ENCODE measurements at regions of chr17 and their contacts with region 1.

Region 1: DNA sequence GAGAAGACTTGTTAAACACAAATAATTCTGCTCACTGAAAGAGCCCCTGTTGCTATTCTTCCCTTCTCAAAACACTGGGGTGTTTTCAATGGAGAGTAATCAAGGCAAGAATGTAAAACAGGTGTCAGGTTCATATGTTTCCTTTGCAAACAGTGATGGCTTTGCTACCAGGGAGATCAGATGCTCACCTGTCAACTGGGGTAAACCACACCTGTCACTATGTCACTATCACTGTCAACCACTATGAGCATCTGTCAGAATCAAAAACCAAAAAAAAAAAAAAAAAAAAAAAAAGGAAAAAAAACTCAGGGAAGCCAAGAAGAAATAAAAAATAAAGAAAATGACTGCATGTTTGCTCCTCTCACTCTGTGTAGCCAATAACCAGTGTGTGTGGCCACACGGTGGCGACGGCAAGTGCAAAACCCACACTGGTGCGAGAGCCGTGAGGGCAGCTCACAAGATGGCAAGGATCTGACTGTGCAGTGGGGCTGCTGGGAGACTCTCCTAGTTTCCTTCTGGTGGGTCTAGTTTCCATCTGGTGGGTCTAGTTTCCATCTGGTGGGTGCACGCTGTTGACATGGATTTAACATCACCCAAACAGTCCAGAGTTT is 22.7 kb downstream of the USP22 start:
- H3K4me3 ChIP-seq: no peak overlapping the region
- H3K27ac ChIP-seq: no peak overlapping the region; the same call in 1 of the 2 replicates
- H3K4me1 ChIP-seq: no peaks in the 10 kb centered on the region
- CTCF ChIP-seq: peak; percentile 55

Region 2: DNA sequence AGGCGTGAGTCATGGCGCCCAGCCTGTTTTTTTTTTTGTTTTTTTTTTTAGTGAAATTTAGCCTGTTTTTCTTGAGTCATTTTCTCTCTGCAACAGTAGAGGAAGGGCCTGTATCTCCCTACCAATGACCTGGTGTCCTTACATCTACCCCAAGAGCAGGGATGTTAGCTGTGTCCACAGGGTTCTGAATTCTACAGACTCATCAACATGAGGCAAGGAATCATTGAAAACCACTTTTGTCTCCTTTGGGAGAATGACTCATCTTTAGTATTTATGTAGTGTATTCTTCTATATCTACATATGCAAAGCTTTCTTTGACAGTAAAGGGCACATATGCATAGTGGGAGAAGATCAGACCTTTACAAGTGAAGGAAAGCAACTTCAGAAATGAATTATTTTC is 905.6 kb before region 1 on chr17:
- CTCF ChIA-PET with region 1: no interaction called
- POLR2A ChIA-PET with region 1: interaction called, 10 read pairs
- H3K4me3 ChIP-seq: no peak overlapping the region
- H3K27ac ChIP-seq: no peak overlapping the region
- H3K4me1 ChIP-seq: no peaks in the 10 kb centered on the region
- CTCF ChIP-seq: no peak